GM18951 (cell line): ENCODE measurements at regions of chr14 and their contacts with region 1.

Region 1: GRCh38 chr14:35404449-35405303 is at the start of gene NFKBIA:
- POLR2A ChIP-seq: peak; percentile 100

Region 2: GRCh38 chr14:35134328-35135123 is 270.1 kb before region 1 on chr14:
- in situ Hi-C with region 1: loop called (anchors 5 kb)
- POLR2A ChIP-seq: no peak

Region 3: GRCh38 chr14:35229495-35230089 is 175.1 kb before region 1 on chr14:
- in situ Hi-C with region 1: loop called (anchors 10 kb)
- POLR2A ChIP-seq: no peak

Region 4: GRCh38 chr14:35292051-35292769 is 112.5 kb before region 1 on chr14 and contains the start of gene PSMA6:
- in situ Hi-C with region 1: loop called (anchors 10 kb)
- POLR2A ChIP-seq: peak; percentile 79

Region 5: GRCh38 chr14:35565871-35566464 is 161.3 kb after region 1 on chr14:
- in situ Hi-C with region 1: no loop called
- POLR2A ChIP-seq: no peak